IMR-90 (cell line): ENCODE measurements at regions of chr16 and their contacts with region 1.

Region 1: GRCh38 chr16:89167425-89167941 is 4.1 kb upstream of the CDH15 start:
- DNase-seq: peak; percentile 59
- ATAC-seq: peak; percentile 80
- H3K4me3 ChIP-seq: no peak overlapping the region
- H3K27ac ChIP-seq: no peak overlapping the region
- H3K4me1 ChIP-seq: peaks cover 5% of the 10 kb centered on the region; the same call in 1 of the 2 replicates
- H3K27me3 ChIP-seq: peaks cover 26% of the 10 kb centered on the region
- CTCF ChIP-seq: peak; percentile 90
- POLR2A ChIP-seq: no peak
- RAD21 ChIP-seq: peak; percentile 94

Region 2: GRCh38 chr16:88737298-88738150 is 430.0 kb before region 1 on chr16:
- CTCF ChIA-PET with region 1: no interaction called
- POLR2A ChIA-PET with region 1: no interaction called
- dilution Hi-C with region 1: no loop called
- in situ Hi-C with region 1: loop called (anchors 10 kb)
- intact Hi-C with region 1: loop called (anchors 1 kb)
- DNase-seq: peak; percentile 70
- ATAC-seq: peak; percentile 94
- H3K4me3 ChIP-seq: no peak overlapping the region
- H3K27ac ChIP-seq: no peak overlapping the region
- H3K4me1 ChIP-seq: no peaks in the 10 kb centered on the region
- H3K27me3 ChIP-seq: no peaks in the 10 kb centered on the region
- CTCF ChIP-seq: peak; percentile 99
- POLR2A ChIP-seq: no peak
- RAD21 ChIP-seq: peak; percentile 72

Region 3: GRCh38 chr16:88743693-88744576 is 423.5 kb before region 1 on chr16:
- CTCF ChIA-PET with region 1: no interaction called
- POLR2A ChIA-PET with region 1: no interaction called
- dilution Hi-C with region 1: no loop called
- in situ Hi-C with region 1: loop called (anchors 10 kb)
- intact Hi-C with region 1: no loop called
- DNase-seq: peak; percentile 55
- ATAC-seq: peak; percentile 90
- H3K4me3 ChIP-seq: no peak overlapping the region
- H3K27ac ChIP-seq: no peak overlapping the region
- H3K4me1 ChIP-seq: no peaks in the 10 kb centered on the region
- H3K27me3 ChIP-seq: no peaks in the 10 kb centered on the region
- CTCF ChIP-seq: peak; percentile 82
- POLR2A ChIP-seq: no peak
- RAD21 ChIP-seq: peak; percentile 70

Region 4: GRCh38 chr16:88811769-88812512 is 355.5 kb before region 1 on chr16 and contains the start of gene APRT:
- CTCF ChIA-PET with region 1: no interaction called
- POLR2A ChIA-PET with region 1: no interaction called
- dilution Hi-C with region 1: no loop called
- in situ Hi-C with region 1: no loop called
- intact Hi-C with region 1: loop called (anchors 2 kb)
- DNase-seq: peak; percentile 95
- ATAC-seq: peak; percentile 87
- H3K4me3 ChIP-seq: peak within 1 kb of the TSS; percentile 60
- H3K27ac ChIP-seq: peak within 1 kb of the TSS; percentile 84
- H3K4me1 ChIP-seq: peaks cover 12% of the 10 kb centered on the region
- H3K27me3 ChIP-seq: no peaks in the 10 kb centered on the region
- CTCF ChIP-seq: peak; percentile 53
- POLR2A ChIP-seq: peak; percentile 87
- RAD21 ChIP-seq: peak; percentile 52
- total RNA-seq, gene APRT: 40.5 and 41.7 TPM in 2 replicates

Region 5: DNA sequence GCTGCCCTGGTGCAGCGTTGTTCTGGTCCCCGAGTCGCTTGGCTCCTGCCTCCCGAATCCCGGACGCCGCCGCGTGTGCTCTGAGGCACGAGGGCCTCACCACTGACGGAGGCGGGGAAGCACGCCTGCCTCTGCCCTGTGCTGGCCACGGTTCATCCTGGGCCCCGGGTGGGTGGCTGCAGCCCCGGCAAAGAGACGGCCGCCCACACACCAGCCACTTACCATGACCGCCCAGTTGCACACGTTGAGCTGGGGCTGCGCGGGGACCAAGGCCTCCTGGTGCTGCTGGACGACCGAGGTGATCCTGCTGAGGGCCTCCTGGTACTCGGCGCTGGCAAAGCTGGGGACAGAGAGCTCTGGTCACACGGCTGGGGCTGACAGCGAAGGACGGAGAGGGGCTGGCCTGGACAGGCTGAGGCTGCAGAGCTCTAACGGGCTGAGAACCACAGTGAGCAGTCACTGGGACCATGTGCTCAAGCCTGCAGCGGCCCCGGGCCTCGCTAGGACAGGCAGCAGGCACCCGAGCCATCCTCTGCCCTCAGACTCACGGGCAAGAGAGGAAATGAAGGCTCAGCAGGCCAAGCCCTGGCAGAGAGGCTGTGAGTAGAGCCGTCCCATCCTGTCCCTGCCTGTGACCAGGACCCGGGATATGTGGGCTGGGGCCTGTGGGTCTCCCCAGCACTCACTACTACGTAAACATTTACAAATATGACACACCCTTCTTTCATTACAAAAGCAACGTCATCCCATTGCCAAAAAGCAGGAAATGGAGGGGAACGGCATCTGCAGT is 349.5 kb before region 1 on chr16:
- CTCF ChIA-PET with region 1: no interaction called
- POLR2A ChIA-PET with region 1: no interaction called
- dilution Hi-C with region 1: no loop called
- in situ Hi-C with region 1: no loop called
- intact Hi-C with region 1: loop called (anchors 1 kb)
- DNase-seq: peak; percentile 70
- ATAC-seq: peak; percentile 68
- H3K4me3 ChIP-seq: no peak overlapping the region
- H3K27ac ChIP-seq: peak overlapping the region; percentile 30
- H3K4me1 ChIP-seq: peaks cover 12% of the 10 kb centered on the region
- H3K27me3 ChIP-seq: no peaks in the 10 kb centered on the region
- CTCF ChIP-seq: no peak
- POLR2A ChIP-seq: peak; percentile 48; the same call in 1 of the 2 replicates
- RAD21 ChIP-seq: no peak